Calu3 (cell line): ENCODE measurements at regions of chr1 and their contacts with region 1.

Region 1: GRCh38 chr1:155598842-155599331 is 11.1 kb upstream of the MSTO1 start:
- DNase-seq: no peak
- H3K4me3 Mint-ChIP-seq: no peak overlapping the region
- H3K27ac Mint-ChIP-seq: no peak overlapping the region
- H3K4me1 Mint-ChIP-seq: peaks cover 14% of the 10 kb centered on the region
- H3K27me3 Mint-ChIP-seq: no peaks in the 10 kb centered on the region
- CTCF ChIP-seq: no peak

Region 2: GRCh38 chr1:156484480-156485058 is 885.7 kb after region 1 on chr1:
- CTCF ChIA-PET with region 1: interaction called, 11 read pairs
- intact Hi-C with region 1: no loop called
- DNase-seq: no peak
- H3K4me3 Mint-ChIP-seq: no peak overlapping the region
- H3K27ac Mint-ChIP-seq: no peak overlapping the region
- H3K4me1 Mint-ChIP-seq: peaks cover 22% of the 10 kb centered on the region
- H3K27me3 Mint-ChIP-seq: no peaks in the 10 kb centered on the region
- CTCF ChIP-seq: no peak